Activated CD4-positive, alpha-beta memory T cell treated with anti-CD3 and anti-CD28 coated beads for 36 hours (primary cell): ENCODE measurements at regions of chr3 and their contacts with region 1.

Region 1: DNA sequence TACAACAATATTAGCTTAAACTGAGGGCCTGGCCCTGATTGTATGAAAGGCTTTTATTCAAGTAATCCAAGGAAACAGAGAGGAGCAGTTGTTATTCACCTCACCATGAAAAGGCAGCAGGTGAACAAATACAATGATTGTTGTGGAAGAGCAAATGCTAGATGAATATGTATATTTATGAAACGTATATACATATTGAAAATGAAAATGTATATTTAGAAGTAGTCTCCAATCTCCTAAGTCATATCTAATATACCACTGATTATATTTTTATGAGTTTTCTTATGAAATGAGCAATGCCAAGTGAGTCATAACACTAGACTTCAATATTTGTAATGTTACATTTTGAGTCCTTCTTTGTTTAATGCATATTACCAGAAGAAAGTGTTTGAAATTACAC is 116.2 kb upstream of the KCNMB2 start:
- DNase-seq: no peak
- H3K4me3 Mint-ChIP-seq: no peak overlapping the region
- H3K27ac Mint-ChIP-seq: no peak overlapping the region
- H3K4me1 Mint-ChIP-seq: peaks cover 5% of the 10 kb centered on the region
- H3K27me3 Mint-ChIP-seq: no peaks in the 10 kb centered on the region

Region 2: GRCh38 chr3:178260887-178261565 is 159.0 kb before region 1 on chr3:
- CTCF ChIA-PET with region 1: no interaction called
- POLR2A ChIA-PET with region 1: no interaction called
- intact Hi-C with region 1: no loop called
- DNase-seq: no peak
- H3K4me3 Mint-ChIP-seq: no peak overlapping the region
- H3K27ac Mint-ChIP-seq: no peak overlapping the region
- H3K4me1 Mint-ChIP-seq: no peaks in the 10 kb centered on the region
- H3K27me3 Mint-ChIP-seq: no peaks in the 10 kb centered on the region

Region 3: DNA sequence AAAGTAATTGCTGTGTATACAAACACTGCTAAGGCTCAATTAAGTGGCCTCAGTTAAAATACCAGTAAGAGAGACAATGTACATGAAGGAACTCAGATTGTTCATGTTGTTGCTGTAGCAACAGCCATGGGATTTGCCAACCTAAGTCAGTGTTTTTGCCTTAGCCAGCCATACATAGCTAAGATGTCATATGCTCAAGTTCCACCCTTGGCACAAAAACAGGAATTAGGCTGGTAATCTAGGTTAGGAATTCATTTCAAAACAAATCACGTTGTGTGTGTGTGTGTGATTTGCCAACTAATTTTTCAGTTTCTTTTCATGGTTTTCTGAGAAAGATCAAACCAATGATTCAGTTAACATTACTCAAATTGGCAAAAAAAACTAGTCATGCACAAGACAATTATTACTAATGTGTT is 27.5 kb before region 1 on chr3:
- CTCF ChIA-PET with region 1: no interaction called
- POLR2A ChIA-PET with region 1: no interaction called
- intact Hi-C with region 1: loop called (anchors 1 kb)
- DNase-seq: no peak
- H3K4me3 Mint-ChIP-seq: no peak overlapping the region
- H3K27ac Mint-ChIP-seq: no peak overlapping the region
- H3K4me1 Mint-ChIP-seq: peaks cover 4% of the 10 kb centered on the region
- H3K27me3 Mint-ChIP-seq: peaks cover 13% of the 10 kb centered on the region

Region 4: DNA sequence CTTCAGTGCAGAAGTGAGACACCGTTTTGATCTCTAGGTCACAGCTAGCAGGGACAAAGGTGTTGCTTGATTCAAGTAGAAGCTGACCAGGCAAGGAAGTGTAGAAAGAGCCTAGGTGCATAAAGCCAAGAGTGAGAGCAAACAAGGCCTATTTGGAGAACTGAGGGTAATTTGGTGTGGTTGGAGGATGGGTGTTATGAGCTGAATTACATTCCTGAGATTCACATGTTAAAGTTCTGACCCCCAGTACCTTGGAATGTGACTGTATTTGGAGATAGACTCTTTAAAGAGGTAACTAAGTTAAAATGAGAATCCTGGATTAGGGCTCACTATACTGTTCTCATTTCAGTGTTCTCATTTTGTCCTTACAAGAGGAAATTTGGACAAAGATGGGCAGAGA is 460.2 kb after region 1 on chr3:
- CTCF ChIA-PET with region 1: no interaction called
- POLR2A ChIA-PET with region 1: no interaction called
- intact Hi-C with region 1: no loop called
- DNase-seq: no peak
- H3K4me3 Mint-ChIP-seq: no peak overlapping the region
- H3K27ac Mint-ChIP-seq: no peak overlapping the region
- H3K4me1 Mint-ChIP-seq: no peaks in the 10 kb centered on the region
- H3K27me3 Mint-ChIP-seq: peaks cover 1% of the 10 kb centered on the region